ENCODE measurements at regions of chr1 and their contacts with region 1.

Region 1: GRCh38 chr1:205354259-205354904 is 2.3 kb downstream of the KLHDC8A start:
- DNase-seq: peak; percentile 71

Region 2: GRCh38 chr1:205273551-205273982 is 80.8 kb before region 1 on chr1:
- CTCF ChIA-PET with region 1: interaction called, 10 read pairs
- POLR2A ChIA-PET with region 1: no interaction called
- DNase-seq: peak; percentile 95

Region 3: DNA sequence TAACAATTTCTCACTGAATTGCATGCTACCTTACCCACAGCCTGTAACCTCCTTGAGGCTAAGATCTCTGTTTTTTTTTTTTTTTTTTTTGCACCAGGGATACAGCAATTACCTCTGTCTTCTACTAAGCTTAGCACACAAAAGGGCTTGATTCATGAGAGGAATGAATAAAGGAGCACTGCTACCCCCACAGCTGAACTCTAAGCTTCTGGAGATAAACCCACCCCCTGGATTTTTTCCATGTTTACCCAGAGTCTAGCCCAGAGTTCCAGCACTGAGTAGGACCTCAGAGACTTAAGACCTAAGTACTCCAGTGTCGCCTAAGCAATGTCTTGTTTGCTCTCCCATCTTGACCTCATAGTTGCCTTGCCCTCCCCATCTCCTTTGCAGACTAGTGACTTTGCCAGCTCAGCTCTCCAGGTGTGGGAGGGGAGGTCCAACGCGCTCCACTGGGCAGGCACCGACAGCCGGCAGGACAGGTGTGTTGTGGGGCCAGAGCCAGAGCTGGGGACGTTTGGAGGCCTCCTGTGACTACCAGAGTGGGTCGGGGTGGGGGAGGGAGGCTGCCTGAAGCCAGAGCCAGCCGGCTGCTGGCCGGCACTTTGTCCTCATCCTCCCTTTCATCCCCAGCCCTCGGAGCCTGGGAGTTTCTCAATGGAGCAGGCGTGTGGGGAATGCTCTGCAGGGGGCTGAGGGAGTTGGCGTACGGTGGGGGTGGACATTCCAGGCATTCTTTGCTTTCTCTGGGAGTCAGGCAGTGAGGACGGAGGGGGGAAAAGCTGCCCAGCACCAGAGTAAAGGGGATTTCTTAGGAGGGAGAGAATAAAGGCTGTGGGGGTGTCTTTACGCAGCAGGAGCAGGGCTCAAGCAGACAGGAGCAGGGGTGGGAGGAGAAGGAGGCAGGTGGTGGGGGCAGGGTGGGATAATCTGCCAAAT is 53.2 kb before region 1 on chr1:
- CTCF ChIA-PET with region 1: no interaction called
- POLR2A ChIA-PET with region 1: no interaction called
- DNase-seq: peak; percentile 60

Region 4: GRCh38 chr1:205335643-205336091 is 18.7 kb before region 1 on chr1:
- CTCF ChIA-PET with region 1: interaction called, 16 read pairs
- POLR2A ChIA-PET with region 1: no interaction called
- DNase-seq: peak; percentile 85

Region 5: GRCh38 chr1:205365945-205366463 is 11.6 kb after region 1 on chr1:
- CTCF ChIA-PET with region 1: interaction called, 15 read pairs
- POLR2A ChIA-PET with region 1: no interaction called
- DNase-seq: no peak

Region 6: DNA sequence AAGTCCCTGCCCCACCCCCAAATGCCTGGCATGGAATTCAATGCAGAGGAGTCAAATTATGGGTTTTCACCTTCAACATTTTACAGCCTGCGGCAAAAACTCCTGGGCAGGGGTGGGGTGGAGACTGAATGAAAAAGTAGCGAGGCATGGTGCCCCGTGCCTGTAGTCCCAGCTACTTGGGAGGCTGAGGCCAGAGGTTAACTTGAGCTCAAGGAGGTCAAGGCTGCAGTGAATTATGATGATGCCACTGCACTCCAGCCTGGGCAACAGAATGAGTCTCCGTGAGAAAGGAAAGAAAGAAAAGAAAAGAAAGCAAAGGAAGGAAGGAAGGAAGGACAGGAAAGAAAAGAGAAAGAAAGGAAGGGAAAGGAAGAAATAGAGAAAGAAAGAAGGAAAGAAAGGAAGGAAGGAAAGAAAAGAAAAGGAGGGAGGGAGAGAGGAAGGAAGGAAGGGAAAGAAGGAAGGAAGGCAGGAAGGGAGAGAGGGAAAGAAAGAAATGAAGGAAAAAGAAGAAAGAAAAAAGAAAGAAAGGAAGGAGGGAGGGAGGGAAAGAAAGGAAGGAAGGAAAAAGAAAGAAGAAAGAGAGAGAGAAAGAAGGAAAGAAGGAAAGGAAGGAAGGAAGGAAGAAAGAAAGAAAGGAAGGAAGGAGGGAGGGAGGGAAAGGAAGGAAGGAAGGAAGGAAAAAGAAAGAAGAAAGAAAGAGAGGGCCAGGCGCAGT is 56.4 kb after region 1 on chr1:
- CTCF ChIA-PET with region 1: no interaction called
- POLR2A ChIA-PET with region 1: no interaction called
- DNase-seq: no peak

Measured in HEK293T (cell line).